ENCODE measurements at regions of chr6 and their contacts with region 1.

Region 1: DNA sequence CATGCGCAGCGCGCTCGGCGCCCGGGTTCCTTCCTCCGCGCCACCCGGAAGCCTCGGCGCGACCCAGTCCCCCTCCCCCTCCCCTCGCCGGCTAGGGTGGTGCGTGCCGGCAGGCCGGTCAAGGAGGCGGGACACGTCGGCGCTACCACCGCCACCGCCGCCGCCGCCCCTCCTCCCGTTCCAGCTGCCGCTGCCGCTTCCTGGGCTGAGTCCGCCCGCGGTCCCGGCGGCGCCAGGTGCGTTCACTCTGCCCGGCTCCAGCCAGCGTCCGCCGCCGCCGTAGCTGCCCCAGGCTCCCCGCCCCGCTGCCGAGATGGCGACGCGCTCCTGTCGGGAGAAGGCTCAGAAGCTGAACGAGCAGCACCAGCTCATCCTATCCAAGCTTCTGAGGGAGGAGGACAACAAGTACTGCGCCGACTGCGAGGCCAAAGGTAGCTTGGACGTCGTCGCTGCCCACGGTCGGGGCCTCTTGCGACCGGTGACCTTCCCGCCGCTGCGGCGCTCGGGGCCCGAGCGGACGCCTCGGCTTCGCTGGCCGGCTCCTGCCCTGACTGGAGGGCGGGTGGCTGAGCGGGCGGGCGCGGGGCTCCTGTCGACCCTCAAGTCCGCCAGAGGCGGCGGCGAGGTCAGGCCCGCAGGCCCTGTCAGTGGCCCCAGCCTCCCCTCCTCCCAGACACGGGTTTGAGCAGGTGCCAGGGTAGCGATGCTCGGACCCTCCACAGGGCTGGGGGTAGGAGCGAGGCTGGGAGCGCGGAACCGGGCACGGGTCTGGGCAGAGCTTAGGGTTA is at the start of gene SMAP1:
- DNase-seq: peak; percentile 86
- ATAC-seq: peak; percentile 93
- H3K4me3 ChIP-seq: peak within 1 kb of the TSS; percentile 77
- H3K27ac ChIP-seq: 0 out of 2 replicates have a peak within 1 kb of the TSS, but pooled peaks have one; percentile 14
- H3K4me1 ChIP-seq: peaks cover 17% of the 10 kb centered on the region; the same call in 1 of the 2 replicates
- H3K27me3 ChIP-seq: no peaks in the 10 kb centered on the region
- CTCF ChIP-seq: no peak
- total RNA-seq, gene SMAP1: 14.9 and 15.7 TPM in 2 replicates

Region 2: GRCh38 chr6:70547313-70547712 is 120.6 kb before region 1 on chr6:
- CTCF ChIA-PET with region 1: no interaction called
- POLR2A ChIA-PET with region 1: no interaction called
- intact Hi-C with region 1: loop called (anchors 5 kb)
- DNase-seq: peak; percentile 38
- ATAC-seq: peak; percentile 89
- H3K4me3 ChIP-seq: no peak overlapping the region
- H3K27ac ChIP-seq: no peak overlapping the region
- H3K4me1 ChIP-seq: peaks cover 3% of the 10 kb centered on the region; the same call in 1 of the 2 replicates
- H3K27me3 ChIP-seq: no peaks in the 10 kb centered on the region
- CTCF ChIP-seq: peak; percentile 52

Region 3: GRCh38 chr6:70566751-70567382 is 101.0 kb before region 1 on chr6 and contains the start of gene SDHAF4:
- CTCF ChIA-PET with region 1: no interaction called
- POLR2A ChIA-PET with region 1: no interaction called
- intact Hi-C with region 1: loop called (anchors 5 kb)
- DNase-seq: peak; percentile 84
- ATAC-seq: peak; percentile 96
- H3K4me3 ChIP-seq: peak within 1 kb of the TSS; percentile 85
- H3K27ac ChIP-seq: peak within 1 kb of the TSS; percentile 43
- H3K4me1 ChIP-seq: peaks cover 8% of the 10 kb centered on the region; the same call in 1 of the 2 replicates
- H3K27me3 ChIP-seq: no peaks in the 10 kb centered on the region
- CTCF ChIP-seq: no peak
- total RNA-seq, gene SDHAF4: 1.5 and 6.2 TPM in 2 replicates

Region 4: GRCh38 chr6:71015392-71015791 is 347.5 kb after region 1 on chr6:
- CTCF ChIA-PET with region 1: no interaction called
- POLR2A ChIA-PET with region 1: no interaction called
- intact Hi-C with region 1: no loop called
- DNase-seq: no peak
- ATAC-seq: no peak
- H3K4me3 ChIP-seq: no peak overlapping the region
- H3K27ac ChIP-seq: no peak overlapping the region
- H3K4me1 ChIP-seq: no peaks in the 10 kb centered on the region
- H3K27me3 ChIP-seq: no peaks in the 10 kb centered on the region
- CTCF ChIP-seq: no peak

Measured in PC-3 (cell line).